ENCODE measurements at regions of chr10 and their contacts with region 1.

Region 1: DNA sequence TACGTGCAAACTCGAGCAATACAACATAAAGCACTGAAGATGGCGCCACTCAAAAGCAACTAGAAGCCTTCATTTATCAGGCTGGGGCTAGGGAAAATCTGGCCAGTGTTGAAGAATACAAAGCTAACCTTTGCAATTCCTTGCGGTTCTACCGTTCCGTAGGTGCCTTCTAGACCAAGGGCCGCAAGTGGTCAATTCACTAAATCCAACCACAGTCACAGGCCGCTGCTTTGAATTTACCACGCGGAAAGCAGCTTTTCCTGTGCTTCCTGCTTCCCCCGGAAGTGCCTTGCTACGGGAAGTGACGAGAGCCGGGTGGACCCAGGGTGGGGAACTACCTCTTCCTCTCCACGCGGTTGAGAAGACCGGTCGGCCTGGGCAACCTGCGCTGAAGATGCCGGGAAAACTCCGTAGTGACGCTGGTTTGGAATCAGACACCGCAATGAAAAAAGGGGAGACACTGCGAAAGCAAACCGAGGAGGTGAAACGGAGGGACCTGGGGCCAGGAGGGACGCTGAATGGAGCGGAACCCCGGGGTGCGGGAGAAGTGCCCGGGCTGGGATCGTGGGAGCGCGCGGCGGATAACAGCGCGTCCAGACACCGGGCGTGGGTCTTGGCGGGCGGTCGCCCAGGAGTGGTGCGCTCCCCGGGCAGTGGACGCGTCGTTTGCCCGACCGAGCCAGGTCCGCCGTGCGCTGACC is at the start of gene DDX21:
- DNase-seq: peak; percentile 76
- ATAC-seq: peak; percentile 87
- H3K4me3 ChIP-seq: peak within 1 kb of the TSS; percentile 93
- H3K27ac ChIP-seq: peak within 1 kb of the TSS; percentile 94
- H3K4me1 ChIP-seq: no peaks in the 10 kb centered on the region
- H3K27me3 ChIP-seq: no peaks in the 10 kb centered on the region
- CTCF ChIP-seq: peak; percentile 66 to 77 (median 69)
- EP300 ChIP-seq: no peak
- POLR2A ChIP-seq: peak; percentile 94
- RAD21 ChIP-seq: peak; percentile 53
- polyA plus RNA-seq, gene DDX21: 80.8 to 88.5 TPM

Region 2: DNA sequence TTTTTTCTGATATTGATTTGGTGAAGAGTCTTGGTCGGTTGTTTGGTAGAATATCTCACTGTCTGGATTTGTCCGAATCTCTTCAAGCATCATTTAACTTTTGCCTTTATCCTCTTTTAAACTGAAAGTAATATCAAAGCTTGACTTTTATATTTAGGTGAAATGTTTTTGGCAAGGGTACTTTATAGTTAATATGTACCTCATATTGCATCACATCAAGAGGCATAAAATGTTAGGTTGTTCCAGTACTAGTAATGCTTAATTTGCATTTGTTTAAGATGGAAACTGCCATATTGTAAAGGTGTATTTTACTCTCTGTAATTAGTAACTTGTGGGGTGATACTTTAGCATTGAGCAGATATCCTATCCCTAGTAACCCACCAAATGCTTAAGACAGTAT is 17.1 kb before region 1 on chr10:
- CTCF ChIA-PET with region 1: interaction called, 14 read pairs
- POLR2A ChIA-PET with region 1: no interaction called
- RAD21 ChIA-PET with region 1: no interaction called
- SMC1A ChIA-PET with region 1: interaction called, 4 read pairs
- in situ Hi-C with region 1: no loop called
- intact Hi-C with region 1: no loop called
- DNase-seq: no peak
- ATAC-seq: no peak
- H3K4me3 ChIP-seq: no peak overlapping the region
- H3K27ac ChIP-seq: no peak overlapping the region
- H3K4me1 ChIP-seq: no peaks in the 10 kb centered on the region
- H3K27me3 ChIP-seq: no peaks in the 10 kb centered on the region
- CTCF ChIP-seq: no peak
- EP300 ChIP-seq: no peak
- POLR2A ChIP-seq: no peak
- RAD21 ChIP-seq: no peak

Region 3: GRCh38 chr10:68973975-68974374 is 18.0 kb after region 1 on chr10:
- CTCF ChIA-PET with region 1: interaction called, 10 read pairs
- POLR2A ChIA-PET with region 1: interaction called, 4 read pairs
- RAD21 ChIA-PET with region 1: no interaction called
- SMC1A ChIA-PET with region 1: interaction called, 15 read pairs
- in situ Hi-C with region 1: no loop called
- intact Hi-C with region 1: no loop called
- DNase-seq: no peak
- ATAC-seq: no peak
- H3K4me3 ChIP-seq: no peak overlapping the region
- H3K27ac ChIP-seq: no peak overlapping the region
- H3K4me1 ChIP-seq: no peaks in the 10 kb centered on the region
- H3K27me3 ChIP-seq: no peaks in the 10 kb centered on the region
- CTCF ChIP-seq: no peak
- EP300 ChIP-seq: no peak
- POLR2A ChIP-seq: no peak; the same call in 1 of the 2 replicates
- RAD21 ChIP-seq: no peak

Region 4: DNA sequence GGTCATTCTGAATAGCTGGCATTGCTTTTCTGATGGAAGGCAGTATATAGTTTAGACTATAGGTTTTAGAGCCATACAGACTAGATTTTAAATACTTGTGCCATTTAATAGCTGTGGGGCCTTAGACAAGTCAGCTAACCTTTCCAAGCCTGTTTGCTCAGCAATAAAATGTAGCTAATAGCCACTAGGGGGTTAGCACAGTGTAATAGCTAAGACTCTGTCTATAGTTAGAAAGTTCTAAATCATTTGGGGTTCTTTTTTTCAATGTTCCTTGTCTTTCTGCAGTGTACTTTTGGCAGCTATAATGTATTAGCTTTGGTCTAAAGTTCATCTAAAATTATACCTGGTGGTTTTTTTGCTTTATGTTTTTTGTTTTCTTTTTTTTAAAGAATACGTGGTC is 25.1 kb after region 1 on chr10:
- CTCF ChIA-PET with region 1: interaction called, 14 read pairs
- POLR2A ChIA-PET with region 1: interaction called, 5 read pairs
- RAD21 ChIA-PET with region 1: interaction called, 6 read pairs
- SMC1A ChIA-PET with region 1: interaction called, 15 read pairs
- in situ Hi-C with region 1: no loop called
- intact Hi-C with region 1: no loop called
- DNase-seq: no peak
- ATAC-seq: peak; percentile 75
- H3K4me3 ChIP-seq: no peak overlapping the region
- H3K27ac ChIP-seq: no peak overlapping the region
- H3K4me1 ChIP-seq: no peaks in the 10 kb centered on the region
- H3K27me3 ChIP-seq: no peaks in the 10 kb centered on the region
- CTCF ChIP-seq: peak in 2 of 3 experiments; percentile 11 to 24; a peak in 1 of 6 replicates
- EP300 ChIP-seq: no peak
- POLR2A ChIP-seq: no peak
- RAD21 ChIP-seq: 0 out of 2 replicates have a peak, but pooled peaks have one; percentile 16

Region 5: GRCh38 chr10:69080226-69080625 is 124.2 kb after region 1 on chr10:
- CTCF ChIA-PET with region 1: no interaction called
- POLR2A ChIA-PET with region 1: interaction called, 10 read pairs
- RAD21 ChIA-PET with region 1: no interaction called
- SMC1A ChIA-PET with region 1: no interaction called
- in situ Hi-C with region 1: no loop called
- intact Hi-C with region 1: no loop called
- DNase-seq: no peak
- ATAC-seq: no peak
- H3K4me3 ChIP-seq: no peak overlapping the region
- H3K27ac ChIP-seq: no peak overlapping the region
- H3K4me1 ChIP-seq: peaks cover 1% of the 10 kb centered on the region; the same call in 1 of the 2 replicates
- H3K27me3 ChIP-seq: no peaks in the 10 kb centered on the region
- CTCF ChIP-seq: no peak
- EP300 ChIP-seq: no peak
- POLR2A ChIP-seq: no peak
- RAD21 ChIP-seq: no peak